ENCODE measurements at regions of chr4 and their contacts with region 1.

Region 1: GRCh38 chr4:21765810-21766407 is 182.7 kb downstream of the KCNIP4 start:
- DNase-seq: peak; percentile 52
- H3K4me3 ChIP-seq: no peak overlapping the region
- H3K27ac ChIP-seq: no peak overlapping the region
- H3K4me1 ChIP-seq: no peaks in the 10 kb centered on the region
- H3K27me3 ChIP-seq: no peaks in the 10 kb centered on the region
- CTCF ChIP-seq: peak; percentile 88

Region 2: GRCh38 chr4:21290562-21290961 is 475.3 kb before region 1 on chr4:
- CTCF ChIA-PET with region 1: no interaction called
- POLR2A ChIA-PET with region 1: no interaction called
- intact Hi-C with region 1: no loop called
- DNase-seq: no peak
- H3K4me3 ChIP-seq: no peak overlapping the region
- H3K27ac ChIP-seq: no peak overlapping the region
- H3K4me1 ChIP-seq: no peaks in the 10 kb centered on the region
- H3K27me3 ChIP-seq: no peaks in the 10 kb centered on the region
- CTCF ChIP-seq: no peak

Region 3: GRCh38 chr4:21512353-21512752 is 253.6 kb before region 1 on chr4:
- CTCF ChIA-PET with region 1: no interaction called
- POLR2A ChIA-PET with region 1: no interaction called
- intact Hi-C with region 1: loop called (anchors 1 kb)
- DNase-seq: peak; percentile 48
- H3K4me3 ChIP-seq: no peak overlapping the region
- H3K27ac ChIP-seq: no peak overlapping the region
- H3K4me1 ChIP-seq: no peaks in the 10 kb centered on the region
- H3K27me3 ChIP-seq: no peaks in the 10 kb centered on the region
- CTCF ChIP-seq: peak; percentile 52

Region 4: GRCh38 chr4:22115262-22115661 is 349.4 kb after region 1 on chr4:
- CTCF ChIA-PET with region 1: no interaction called
- POLR2A ChIA-PET with region 1: no interaction called
- intact Hi-C with region 1: no loop called
- DNase-seq: no peak
- H3K4me3 ChIP-seq: no peak overlapping the region
- H3K27ac ChIP-seq: no peak overlapping the region
- H3K4me1 ChIP-seq: no peaks in the 10 kb centered on the region
- H3K27me3 ChIP-seq: no peaks in the 10 kb centered on the region
- CTCF ChIP-seq: no peak